ENCODE measurements at regions of chr10 and their contacts with region 1.

Region 1: DNA sequence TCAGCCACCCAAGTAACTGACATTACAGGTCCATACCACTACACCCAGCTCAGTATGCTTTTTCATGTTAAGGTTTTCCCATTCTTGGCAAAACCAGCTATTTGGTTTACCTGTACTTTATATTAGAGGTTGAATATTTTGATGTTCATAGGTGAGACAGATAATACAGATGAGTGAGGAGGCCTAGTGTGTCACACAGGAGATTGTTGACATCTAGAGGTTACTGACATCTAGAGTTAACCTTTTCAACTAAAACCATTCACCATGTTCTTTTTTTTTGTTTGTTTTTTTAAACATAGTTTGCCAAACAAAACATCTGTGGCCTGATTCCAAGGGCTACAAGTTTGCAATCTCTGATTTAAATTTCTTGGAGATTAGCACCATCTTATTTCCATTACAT is 8.0 kb downstream of the GHITM start:
- DNase-seq: no peak
- ATAC-seq: no peak
- H3K4me3 Mint-ChIP-seq: no peak overlapping the region
- H3K27ac Mint-ChIP-seq: no peak overlapping the region
- H3K4me1 Mint-ChIP-seq: peaks cover 8% of the 10 kb centered on the region
- H3K27me3 Mint-ChIP-seq: no peaks in the 10 kb centered on the region

Region 2: GRCh38 chr10:84059523-84059922 is 87.8 kb before region 1 on chr10:
- CTCF ChIA-PET with region 1: no interaction called
- POLR2A ChIA-PET with region 1: no interaction called
- DNase-seq: no peak
- ATAC-seq: no peak
- H3K4me3 Mint-ChIP-seq: no peak overlapping the region
- H3K27ac Mint-ChIP-seq: no peak overlapping the region
- H3K4me1 Mint-ChIP-seq: no peaks in the 10 kb centered on the region
- H3K27me3 Mint-ChIP-seq: no peaks in the 10 kb centered on the region

Region 3: DNA sequence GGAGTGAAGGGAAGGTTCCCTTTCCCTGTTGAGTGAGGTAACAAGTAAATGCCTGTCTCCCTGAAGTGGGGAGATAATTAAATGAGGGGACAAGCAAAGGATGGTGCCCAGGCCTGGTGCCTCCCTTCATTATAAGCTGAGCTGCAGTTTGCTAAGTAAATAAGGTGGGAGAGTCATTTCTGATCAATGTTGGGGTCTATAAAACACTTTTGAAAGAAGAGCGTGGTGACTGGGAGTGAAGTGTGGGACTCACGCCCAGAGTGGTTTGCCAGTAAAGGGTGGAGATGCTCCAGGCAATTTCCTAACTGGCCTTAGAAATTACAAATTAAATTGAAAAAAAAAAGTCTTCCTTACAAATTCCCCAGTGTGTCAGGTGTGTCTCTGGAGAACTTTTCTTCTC is 16.6 kb after region 1 on chr10:
- CTCF ChIA-PET with region 1: interaction called, 24 read pairs
- POLR2A ChIA-PET with region 1: no interaction called
- DNase-seq: no peak
- ATAC-seq: no peak
- H3K4me3 Mint-ChIP-seq: no peak overlapping the region
- H3K27ac Mint-ChIP-seq: no peak overlapping the region
- H3K4me1 Mint-ChIP-seq: no peaks in the 10 kb centered on the region
- H3K27me3 Mint-ChIP-seq: peaks cover 17% of the 10 kb centered on the region

Region 4: GRCh38 chr10:84177541-84178141 is 30.3 kb after region 1 on chr10:
- CTCF ChIA-PET with region 1: interaction called, 17 read pairs
- POLR2A ChIA-PET with region 1: no interaction called
- DNase-seq: peak; percentile 82
- ATAC-seq: peak; percentile 93
- H3K4me3 Mint-ChIP-seq: peak overlapping the region; percentile 16
- H3K27ac Mint-ChIP-seq: no peak overlapping the region
- H3K4me1 Mint-ChIP-seq: peaks cover 2% of the 10 kb centered on the region
- H3K27me3 Mint-ChIP-seq: no peaks in the 10 kb centered on the region

Region 5: DNA sequence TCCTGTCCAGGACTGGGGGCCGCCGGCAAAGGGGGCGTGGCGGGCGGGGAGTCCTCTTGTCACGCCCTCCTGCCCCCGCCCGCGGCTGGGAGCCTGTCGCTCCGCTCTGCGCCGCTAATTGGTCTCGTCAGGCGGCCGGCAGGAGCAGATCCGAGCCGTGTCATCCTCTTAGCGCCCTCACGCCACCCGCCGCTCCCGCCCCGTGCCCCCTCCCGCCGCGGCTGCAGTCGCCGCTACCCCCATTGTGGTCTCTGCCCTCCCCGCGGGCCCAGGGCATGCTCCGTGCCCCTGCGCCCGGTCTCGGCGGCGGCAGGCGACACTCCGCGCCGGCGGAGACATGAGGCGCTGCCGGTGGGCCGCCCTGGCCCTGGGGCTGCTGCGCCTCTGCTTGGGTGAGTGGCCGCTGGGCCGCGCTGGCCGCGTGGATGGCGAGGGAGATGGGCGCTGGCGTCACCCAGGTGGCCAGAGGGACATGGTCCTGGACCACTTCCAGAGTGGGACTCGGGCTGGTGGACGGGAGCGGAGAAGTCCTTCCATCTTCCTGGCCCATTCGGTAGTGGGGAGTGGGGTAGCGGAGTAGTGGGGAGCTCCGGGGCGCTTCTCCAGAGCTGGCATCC is 47.2 kb after region 1 on chr10 and contains the start of gene CDHR1:
- CTCF ChIA-PET with region 1: interaction called, 16 read pairs
- POLR2A ChIA-PET with region 1: no interaction called
- DNase-seq: peak; percentile 65
- ATAC-seq: peak; percentile 84
- H3K4me3 Mint-ChIP-seq: peak within 1 kb of the TSS; percentile 50
- H3K27ac Mint-ChIP-seq: no peak within 1 kb of the TSS
- H3K4me1 Mint-ChIP-seq: peaks cover 23% of the 10 kb centered on the region
- H3K27me3 Mint-ChIP-seq: peaks cover 52% of the 10 kb centered on the region
- total RNA-seq, gene CDHR1: 0.26 to 0.29 TPM

Region 6: GRCh38 chr10:84205049-84205852 is 57.9 kb after region 1 on chr10:
- CTCF ChIA-PET with region 1: interaction called, 111 read pairs
- POLR2A ChIA-PET with region 1: interaction called, 3 read pairs
- DNase-seq: peak; percentile 78
- ATAC-seq: peak; percentile 83
- H3K4me3 Mint-ChIP-seq: no peak overlapping the region
- H3K27ac Mint-ChIP-seq: no peak overlapping the region
- H3K4me1 Mint-ChIP-seq: no peaks in the 10 kb centered on the region
- H3K27me3 Mint-ChIP-seq: peaks cover 11% of the 10 kb centered on the region

Region 7: GRCh38 chr10:84214612-84215235 is 67.4 kb after region 1 on chr10:
- CTCF ChIA-PET with region 1: interaction called, 111 read pairs
- POLR2A ChIA-PET with region 1: no interaction called
- DNase-seq: peak; percentile 54
- ATAC-seq: peak; percentile 73
- H3K4me3 Mint-ChIP-seq: no peak overlapping the region
- H3K27ac Mint-ChIP-seq: no peak overlapping the region
- H3K4me1 Mint-ChIP-seq: no peaks in the 10 kb centered on the region
- H3K27me3 Mint-ChIP-seq: no peaks in the 10 kb centered on the region